Psoas muscle (tissue), 8 donors: ENCODE measurements at regions of chr18 and their contacts with region 1.

Region 1: GRCh38 chr18:11379660-11380059 is 229.7 kb upstream of the SLC35G4 start:
- DNase-seq: no peak
- ATAC-seq: no peak
- H3K4me3 ChIP-seq: no peak overlapping the region
- H3K27ac ChIP-seq: no peak overlapping the region
- H3K4me1 ChIP-seq: peaks cover under 1% of the 10 kb centered on the region
- H3K27me3 ChIP-seq: no peaks in the 10 kb centered on the region
- CTCF ChIP-seq: no peak

Region 2: GRCh38 chr18:11497585-11497984 is 117.9 kb after region 1 on chr18:
- intact Hi-C with region 1: loop called in 1 of 2 experiments (anchors 5 kb)
- DNase-seq: peak in 1 of 2 donors; percentile 30
- ATAC-seq: no peak
- H3K4me3 ChIP-seq: no peak overlapping the region
- H3K27ac ChIP-seq: no peak overlapping the region
- H3K4me1 ChIP-seq: peaks cover 10% of the 10 kb centered on the region
- H3K27me3 ChIP-seq: peaks cover 0 to 2% (median 0%) of the 10 kb centered on the region in 3 donors
- CTCF ChIP-seq: no peak